Activated CD4-positive, alpha-beta T cell treated with anti-CD3 and anti-CD28 coated beads, Interleukin-2, amount 10 ng/mL, durations not matched to agents 24 days and 14 days (primary cell): ENCODE measurements at regions of chr2 and their contacts with region 1.

Region 1: DNA sequence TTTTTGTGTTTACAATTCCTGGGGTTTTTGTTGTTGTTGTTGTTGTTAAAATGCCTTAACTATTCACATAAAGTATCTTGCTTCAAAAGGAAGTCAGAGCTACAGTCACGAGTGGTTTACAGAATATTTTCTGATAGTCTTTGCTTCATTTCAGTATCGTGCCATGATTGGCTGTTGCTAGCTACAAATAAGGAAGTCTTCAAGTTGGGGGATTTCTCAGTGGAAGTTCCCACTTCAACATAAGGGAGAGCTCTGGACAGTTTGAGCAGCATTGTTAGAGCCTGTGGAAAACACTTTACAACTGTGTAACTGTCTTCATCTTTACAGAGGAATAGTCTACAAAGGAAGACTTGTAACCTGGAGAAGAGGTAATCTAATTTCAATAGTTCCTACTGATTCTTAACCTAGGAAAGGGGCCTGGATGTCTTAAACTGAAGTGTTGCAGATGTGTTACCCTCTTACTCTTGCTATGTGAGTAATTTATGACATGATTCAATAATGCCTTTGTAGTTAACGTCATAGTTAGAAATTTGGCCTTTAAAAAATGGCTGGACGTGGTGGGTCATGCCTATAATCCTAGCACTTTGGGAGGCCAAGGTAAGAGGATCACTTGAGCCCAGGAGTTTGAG is 23.4 kb upstream of the TANK start:
- DNase-seq: peak; percentile 88
- H3K4me3 Mint-ChIP-seq: peak overlapping the region; percentile 89
- H3K27ac Mint-ChIP-seq: peak overlapping the region; percentile 96
- H3K4me1 Mint-ChIP-seq: peaks cover 39% of the 10 kb centered on the region
- H3K27me3 Mint-ChIP-seq: no peaks in the 10 kb centered on the region

Region 2: GRCh38 chr2:161104054-161104553 is 32.7 kb before region 1 on chr2:
- intact Hi-C with region 1: loop called (anchors 2 kb)
- DNase-seq: peak; percentile 54
- H3K4me3 Mint-ChIP-seq: peak overlapping the region; percentile 31
- H3K27ac Mint-ChIP-seq: peak overlapping the region; percentile 38
- H3K4me1 Mint-ChIP-seq: peaks cover 14% of the 10 kb centered on the region
- H3K27me3 Mint-ChIP-seq: no peaks in the 10 kb centered on the region

Region 3: GRCh38 chr2:161160226-161161069 is 23.6 kb after region 1 on chr2 and contains the start of gene TANK:
- intact Hi-C with region 1: loop called (anchors 1 kb)
- DNase-seq: peak; percentile 96
- H3K4me3 Mint-ChIP-seq: peak within 1 kb of the TSS; percentile 97
- H3K27ac Mint-ChIP-seq: peak within 1 kb of the TSS; percentile 98
- H3K4me1 Mint-ChIP-seq: peaks cover 55% of the 10 kb centered on the region
- H3K27me3 Mint-ChIP-seq: no peaks in the 10 kb centered on the region
- total RNA-seq, gene TANK: 91.2 and 97.2 TPM in 2 replicates

Region 4: GRCh38 chr2:161238560-161239325 is 101.9 kb after region 1 on chr2:
- intact Hi-C with region 1: loop called (anchors 2 kb)
- DNase-seq: peak; percentile 87
- H3K4me3 Mint-ChIP-seq: peak overlapping the region; percentile 92
- H3K27ac Mint-ChIP-seq: peak overlapping the region; percentile 82
- H3K4me1 Mint-ChIP-seq: peaks cover 41% of the 10 kb centered on the region
- H3K27me3 Mint-ChIP-seq: peaks cover 2% of the 10 kb centered on the region

Region 5: GRCh38 chr2:161332371-161332967 is 195.7 kb after region 1 on chr2:
- intact Hi-C with region 1: no loop called
- DNase-seq: no peak
- H3K4me3 Mint-ChIP-seq: no peak overlapping the region
- H3K27ac Mint-ChIP-seq: no peak overlapping the region
- H3K4me1 Mint-ChIP-seq: peaks cover 3% of the 10 kb centered on the region
- H3K27me3 Mint-ChIP-seq: no peaks in the 10 kb centered on the region